ENCODE measurements at regions of chr7 and their contacts with region 1.

Region 1: DNA sequence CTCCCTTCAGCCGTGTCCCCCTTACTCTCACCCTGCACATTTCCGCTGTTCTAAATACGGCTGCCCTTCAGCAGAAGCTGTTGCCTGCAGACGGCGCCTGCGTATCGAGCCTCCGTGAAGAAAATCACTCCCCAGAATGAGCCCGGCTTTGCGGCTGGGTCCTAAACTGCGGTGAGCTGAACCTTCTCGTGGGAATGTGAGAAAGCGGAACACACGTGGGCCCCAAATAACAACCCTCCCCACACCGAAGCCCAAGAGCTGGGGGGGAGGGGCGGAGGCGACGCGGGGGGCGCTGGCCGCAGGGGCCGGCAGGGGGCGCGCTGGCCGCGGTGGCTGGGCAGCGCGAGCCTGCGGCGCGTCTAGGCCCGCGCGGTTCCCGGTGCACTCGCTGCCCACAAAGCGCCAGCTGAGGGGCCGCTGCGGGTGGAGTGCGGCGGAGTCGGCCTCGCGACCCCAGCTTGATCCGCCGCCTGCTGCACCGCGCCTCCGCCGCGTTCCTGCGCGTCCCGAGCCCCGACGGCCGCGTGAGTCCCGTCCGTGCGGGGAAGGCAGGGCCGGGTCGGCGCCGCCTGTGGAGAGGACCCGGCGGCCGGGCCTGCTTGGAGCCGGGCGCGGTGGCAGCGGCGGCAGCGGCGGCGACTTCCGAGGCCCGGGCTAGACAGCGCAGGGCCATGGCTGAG is at the start of gene ZNF398:
- DNase-seq: peak; percentile 97

Region 2: GRCh38 chr7:149050941-149051340 is 96.3 kb before region 1 on chr7:
- CTCF ChIA-PET with region 1: no interaction called
- POLR2A ChIA-PET with region 1: no interaction called
- DNase-seq: no peak

Region 3: GRCh38 chr7:149071641-149072437 is 75.4 kb before region 1 on chr7:
- CTCF ChIA-PET with region 1: no interaction called
- POLR2A ChIA-PET with region 1: interaction called, 14 read pairs
- DNase-seq: no peak

Region 4: GRCh38 chr7:149125863-149126661 is 21.1 kb before region 1 on chr7 and contains the start of gene ZNF425:
- CTCF ChIA-PET with region 1: interaction called, 40 read pairs
- POLR2A ChIA-PET with region 1: interaction called, 88 read pairs
- DNase-seq: peak; percentile 98

Region 5: GRCh38 chr7:149136118-149136517 is 11.1 kb before region 1 on chr7:
- CTCF ChIA-PET with region 1: interaction called, 18 read pairs
- POLR2A ChIA-PET with region 1: interaction called, 6 read pairs
- DNase-seq: no peak

Region 6: GRCh38 chr7:149172534-149172920 is 25.3 kb after region 1 on chr7:
- CTCF ChIA-PET with region 1: no interaction called
- POLR2A ChIA-PET with region 1: no interaction called
- DNase-seq: no peak

Region 7: GRCh38 chr7:149369508-149369907 is 222.3 kb after region 1 on chr7:
- CTCF ChIA-PET with region 1: no interaction called
- POLR2A ChIA-PET with region 1: no interaction called
- DNase-seq: no peak